ENCODE measurements at regions of chr11 and their contacts with region 1.

Region 1: GRCh38 chr11:79708300-79708932 is 267.6 kb upstream of the TENM4 start:
- DNase-seq: peak; percentile 37 to 55
- H3K4me3 ChIP-seq: no peak overlapping the region
- H3K27ac ChIP-seq: no peak overlapping the region
- H3K4me1 ChIP-seq: no peaks in the 10 kb centered on the region
- H3K27me3 ChIP-seq: no peaks in the 10 kb centered on the region
- CTCF ChIP-seq: peak; percentile 84

Region 2: GRCh38 chr11:80155412-80156017 is 447.1 kb after region 1 on chr11:
- CTCF ChIA-PET with region 1: no interaction called
- POLR2A ChIA-PET with region 1: no interaction called
- intact Hi-C with region 1: loop called (anchors 2 kb)
- DNase-seq: no peak
- H3K4me3 ChIP-seq: no peak overlapping the region
- H3K27ac ChIP-seq: no peak overlapping the region
- H3K4me1 ChIP-seq: no peaks in the 10 kb centered on the region
- H3K27me3 ChIP-seq: no peaks in the 10 kb centered on the region
- CTCF ChIP-seq: peak; percentile 67

Region 3: GRCh38 chr11:80320765-80321164 is 612.3 kb after region 1 on chr11:
- CTCF ChIA-PET with region 1: no interaction called
- POLR2A ChIA-PET with region 1: no interaction called
- intact Hi-C with region 1: loop called (anchors 1 kb)
- DNase-seq: no peak
- H3K4me3 ChIP-seq: no peak overlapping the region
- H3K27ac ChIP-seq: no peak overlapping the region
- H3K4me1 ChIP-seq: no peaks in the 10 kb centered on the region
- H3K27me3 ChIP-seq: no peaks in the 10 kb centered on the region
- CTCF ChIP-seq: peak; percentile 28; the same call in 1 of the 2 replicates

Region 4: DNA sequence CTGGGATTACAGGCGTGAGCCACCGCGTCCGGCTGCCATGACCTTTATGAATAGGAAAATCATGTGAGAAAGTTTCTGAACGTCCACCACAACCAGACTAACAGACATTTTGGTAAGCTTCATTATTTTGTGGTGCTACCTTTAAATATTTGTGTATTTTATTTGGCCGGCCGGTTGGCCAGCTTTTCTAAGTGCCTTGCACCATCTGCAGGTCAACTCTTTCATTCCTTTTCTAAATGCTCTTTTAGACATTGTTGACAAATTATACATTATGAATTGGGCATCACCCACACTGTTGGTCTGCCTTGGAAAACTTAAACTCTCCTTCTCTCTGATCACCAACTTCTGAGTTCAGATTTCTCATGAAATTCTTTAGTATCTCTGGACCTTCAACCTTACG is 1255.1 kb after region 1 on chr11:
- CTCF ChIA-PET with region 1: no interaction called
- POLR2A ChIA-PET with region 1: no interaction called
- intact Hi-C with region 1: loop called (anchors 2 kb)
- DNase-seq: no peak
- H3K4me3 ChIP-seq: no peak overlapping the region
- H3K27ac ChIP-seq: no peak overlapping the region
- H3K4me1 ChIP-seq: peaks cover 3% of the 10 kb centered on the region; the same call in 1 of the 2 replicates
- H3K27me3 ChIP-seq: no peaks in the 10 kb centered on the region
- CTCF ChIP-seq: no peak

Region 5: GRCh38 chr11:81005595-81005994 is 1297.2 kb after region 1 on chr11:
- CTCF ChIA-PET with region 1: no interaction called
- POLR2A ChIA-PET with region 1: no interaction called
- intact Hi-C with region 1: loop called (anchors 5 kb)
- DNase-seq: peak in 1 of 2 experiments; percentile 42
- H3K4me3 ChIP-seq: no peak overlapping the region
- H3K27ac ChIP-seq: no peak overlapping the region
- H3K4me1 ChIP-seq: no peaks in the 10 kb centered on the region
- H3K27me3 ChIP-seq: no peaks in the 10 kb centered on the region
- CTCF ChIP-seq: no peak

Region 6: DNA sequence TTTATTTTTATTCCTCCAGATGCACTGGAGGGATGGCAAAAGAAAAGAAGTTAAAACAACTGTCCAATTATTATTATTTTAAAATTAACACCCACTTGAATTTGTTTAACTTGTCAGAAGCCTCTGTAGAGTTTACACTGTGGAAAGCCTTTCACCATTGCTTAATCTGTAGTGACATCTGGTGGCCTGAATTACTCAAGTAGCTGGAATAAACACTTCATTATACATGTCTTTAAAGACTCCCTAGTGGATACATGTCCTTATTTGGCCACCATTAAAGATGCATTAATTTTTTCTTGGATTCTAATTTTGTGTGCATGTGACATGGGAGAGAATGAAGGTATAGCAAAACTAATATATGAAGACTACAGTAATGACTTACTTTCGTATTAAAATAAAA is 1528.7 kb after region 1 on chr11:
- CTCF ChIA-PET with region 1: no interaction called
- POLR2A ChIA-PET with region 1: no interaction called
- intact Hi-C with region 1: loop called (anchors 1 kb)
- DNase-seq: peak; percentile 15 to 40
- H3K4me3 ChIP-seq: no peak overlapping the region
- H3K27ac ChIP-seq: no peak overlapping the region
- H3K4me1 ChIP-seq: no peaks in the 10 kb centered on the region
- H3K27me3 ChIP-seq: no peaks in the 10 kb centered on the region
- CTCF ChIP-seq: peak; percentile 72

Measured in PC-9 (cell line).